ENCODE measurements at regions of chr6 and their contacts with region 1.

Region 1: DNA sequence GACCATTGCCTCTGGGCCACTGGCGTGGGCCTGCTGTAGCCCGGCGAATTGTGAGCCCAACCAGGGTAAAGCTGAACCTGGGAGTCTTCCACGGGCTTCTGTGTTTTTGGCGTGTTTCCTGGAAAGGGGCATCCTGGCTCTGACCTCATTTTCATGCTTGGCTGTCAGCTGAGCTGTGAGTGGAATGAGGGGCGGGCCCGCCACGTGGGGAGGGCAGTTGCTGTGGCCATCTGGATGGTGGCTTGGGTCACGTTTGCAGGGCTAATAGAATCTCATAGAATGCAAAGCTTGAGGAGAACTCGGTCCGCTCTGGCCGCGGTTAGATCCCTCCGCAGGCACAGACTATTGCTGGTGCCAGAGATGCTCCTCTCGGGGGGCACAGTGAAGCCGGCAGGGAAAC is 263.0 kb downstream of the SMOC2 start:
- DNase-seq: no peak
- ATAC-seq: peak in 1 of 4 donors; percentile 39
- H3K4me3 ChIP-seq: no peak overlapping the region
- H3K27ac ChIP-seq: no peak overlapping the region
- H3K4me1 ChIP-seq: no peaks in the 10 kb centered on the region
- H3K27me3 ChIP-seq: peaks cover 0 to 5% (median 0%) of the 10 kb centered on the region in 3 donors
- CTCF ChIP-seq: no peak

Region 2: DNA sequence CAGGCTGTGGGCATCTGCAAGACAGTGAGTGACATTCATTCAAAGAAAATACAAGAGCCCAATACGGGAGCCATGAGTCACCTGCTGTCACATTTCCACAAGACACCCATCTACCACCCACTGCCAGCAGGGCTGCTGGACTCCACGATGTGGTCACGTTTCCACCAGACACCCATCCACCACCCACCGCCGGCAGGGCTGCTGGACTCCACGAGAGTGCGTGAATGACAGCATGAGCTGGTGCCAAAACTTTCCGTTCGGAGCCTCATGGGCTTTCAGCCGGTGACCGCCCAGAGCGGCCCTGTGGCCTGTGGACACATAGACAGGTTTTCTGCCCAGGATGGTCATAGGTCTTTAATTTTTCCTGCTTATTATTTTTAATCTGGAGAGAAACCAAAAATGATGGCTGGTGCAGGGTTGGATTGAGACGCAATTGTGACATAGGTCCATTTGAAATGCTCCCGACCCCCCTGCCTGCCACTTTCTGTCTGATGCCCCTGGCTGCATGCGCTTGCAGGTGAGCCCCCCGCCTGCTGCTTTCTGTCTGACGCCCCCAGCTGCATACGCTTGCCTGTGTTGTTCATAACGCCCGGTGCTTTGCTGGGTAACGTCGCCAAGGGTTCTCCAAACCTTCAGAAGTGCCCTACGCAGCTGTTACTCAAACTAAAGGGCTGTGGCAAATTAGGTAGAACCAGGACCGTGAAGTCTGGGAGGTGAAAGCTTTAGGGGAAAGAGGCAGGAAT is 322.1 kb before region 1 on chr6:
- intact Hi-C with region 1: loop called in 1 of 2 experiments (anchors 1 kb)
- DNase-seq: no peak
- ATAC-seq: no peak
- H3K4me3 ChIP-seq: no peak overlapping the region
- H3K27ac ChIP-seq: no peak overlapping the region
- H3K4me1 ChIP-seq: no peaks in the 10 kb centered on the region
- H3K27me3 ChIP-seq: peaks cover 0 to 10% (median 2%) of the 10 kb centered on the region in 3 donors
- CTCF ChIP-seq: no peak

Region 3: GRCh38 chr6:168658059-168658458 is 45.9 kb before region 1 on chr6:
- intact Hi-C with region 1: no loop called
- DNase-seq: no peak
- ATAC-seq: no peak
- H3K4me3 ChIP-seq: no peak overlapping the region
- H3K27ac ChIP-seq: no peak overlapping the region
- H3K4me1 ChIP-seq: no peaks in the 10 kb centered on the region
- H3K27me3 ChIP-seq: peaks cover 0 to 11% (median 2%) of the 10 kb centered on the region in 3 donors
- CTCF ChIP-seq: no peak

Region 4: GRCh38 chr6:168851460-168852375 is 147.7 kb after region 1 on chr6:
- intact Hi-C with region 1: no loop called
- DNase-seq: no peak
- ATAC-seq: peak in 2 of 4 donors; percentile 24 to 27
- H3K4me3 ChIP-seq: peak overlapping the region; percentile 56
- H3K27ac ChIP-seq: no peak overlapping the region
- H3K4me1 ChIP-seq: peaks cover 4% of the 10 kb centered on the region
- H3K27me3 ChIP-seq: peaks cover 0 to 5% (median 0%) of the 10 kb centered on the region in 3 donors
- CTCF ChIP-seq: no peak

Region 5: GRCh38 chr6:168866534-168866933 is 162.5 kb after region 1 on chr6:
- intact Hi-C with region 1: no loop called
- DNase-seq: no peak
- ATAC-seq: peak in 2 of 4 donors; percentile 19 to 32
- H3K4me3 ChIP-seq: no peak overlapping the region
- H3K27ac ChIP-seq: no peak overlapping the region
- H3K4me1 ChIP-seq: peaks cover 10% of the 10 kb centered on the region
- H3K27me3 ChIP-seq: no peaks in the 10 kb centered on the region
- CTCF ChIP-seq: no peak